Dendritic cell treated with granulocyte-macrophage colony-stimulating factor and Interleukin-4, amounts not matched to agents 40 ng/mL and 50 ng/mL, for 4 days (primary cell): ENCODE measurements at regions of chr1 and their contacts with region 1.

Region 1: DNA sequence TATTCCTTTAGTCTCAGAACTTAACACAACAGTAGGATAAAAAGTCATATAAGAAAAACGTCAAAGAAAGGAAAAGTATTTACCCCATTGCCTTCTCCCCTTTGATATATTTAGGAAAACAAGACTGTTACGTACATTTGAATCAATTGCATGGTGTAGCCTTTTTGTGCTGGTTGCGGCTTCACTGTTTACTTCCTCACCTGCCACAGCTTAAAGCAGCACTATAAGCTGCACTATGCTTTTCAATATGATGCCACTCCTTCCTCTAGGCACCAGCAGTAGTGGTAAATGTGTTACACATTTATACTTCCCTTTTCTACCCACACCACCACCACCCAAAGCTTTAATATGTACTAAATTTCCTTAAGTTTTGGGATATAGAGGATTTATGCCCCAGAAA is 111.1 kb downstream of the ATP1B1 start:
- H3K4me3 Mint-ChIP-seq: no peak overlapping the region
- H3K27ac Mint-ChIP-seq: no peak overlapping the region
- H3K4me1 Mint-ChIP-seq: peaks cover 9% of the 10 kb centered on the region
- H3K27me3 Mint-ChIP-seq: no peaks in the 10 kb centered on the region

Region 2: DNA sequence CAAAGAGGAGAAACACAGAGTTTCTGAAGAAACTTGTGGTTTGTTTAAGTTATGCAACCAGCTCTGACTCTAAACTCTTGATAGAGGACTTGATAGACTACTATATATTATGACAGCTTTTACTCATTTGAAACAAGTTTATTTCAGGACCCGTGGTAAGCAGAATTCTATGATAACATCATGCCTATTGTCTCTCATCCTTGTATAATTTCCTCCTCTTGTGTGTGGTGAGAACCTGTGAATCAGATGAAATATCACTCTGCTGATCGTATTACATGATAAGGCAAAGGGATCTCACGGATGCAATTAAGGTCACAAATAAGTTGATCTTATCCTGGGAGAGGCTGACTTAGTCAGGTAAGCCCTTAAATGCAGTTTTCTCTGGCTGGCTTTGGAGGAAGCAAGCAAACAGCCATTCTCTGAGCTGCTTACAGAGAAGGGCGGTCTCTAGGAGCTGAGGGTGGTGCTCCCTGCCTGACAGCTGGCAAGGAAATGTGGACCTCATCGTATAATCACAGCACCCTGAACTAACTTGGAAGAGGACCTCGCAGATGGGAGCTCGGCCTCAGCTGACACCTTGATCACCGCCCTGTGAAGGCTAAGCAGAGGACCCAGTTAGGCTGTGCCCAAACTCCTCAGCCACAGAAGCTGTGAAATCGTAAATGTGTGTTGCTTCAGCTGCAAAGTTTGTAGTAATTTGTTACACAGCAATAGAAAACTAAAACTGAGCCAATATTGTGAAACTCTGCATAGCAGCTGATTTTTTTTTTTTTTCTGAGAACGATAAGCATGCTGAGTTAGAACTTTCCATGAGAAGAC is 337.5 kb before region 1 on chr1:
- intact Hi-C with region 1: no loop called
- H3K4me3 Mint-ChIP-seq: no peak overlapping the region
- H3K27ac Mint-ChIP-seq: no peak overlapping the region
- H3K4me1 Mint-ChIP-seq: no peaks in the 10 kb centered on the region
- H3K27me3 Mint-ChIP-seq: no peaks in the 10 kb centered on the region

Region 3: DNA sequence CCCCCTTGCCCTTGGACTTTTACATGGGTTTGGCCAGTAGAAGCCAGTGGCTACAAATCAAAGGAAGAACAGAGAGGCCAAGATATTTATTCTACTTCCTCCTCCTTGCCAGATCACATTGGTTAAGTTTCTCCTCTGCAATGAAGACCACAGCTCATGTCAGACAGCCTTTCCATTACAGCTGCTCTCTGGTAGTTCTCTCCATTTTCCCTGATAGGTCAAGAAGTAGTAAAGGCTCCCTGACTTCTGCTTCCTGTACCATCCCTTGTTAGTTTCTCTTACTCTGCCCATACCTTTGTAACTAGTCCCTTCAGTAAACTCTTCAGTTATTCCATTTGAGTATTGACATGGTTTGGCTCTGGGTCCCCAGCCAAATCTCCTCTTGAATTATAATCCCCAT is 122.1 kb after region 1 on chr1:
- intact Hi-C with region 1: loop called (anchors 10 kb)
- H3K4me3 Mint-ChIP-seq: no peak overlapping the region
- H3K27ac Mint-ChIP-seq: no peak overlapping the region
- H3K4me1 Mint-ChIP-seq: no peaks in the 10 kb centered on the region
- H3K27me3 Mint-ChIP-seq: no peaks in the 10 kb centered on the region